ENCODE measurements at regions of chr1 and their contacts with region 1.

Region 1: DNA sequence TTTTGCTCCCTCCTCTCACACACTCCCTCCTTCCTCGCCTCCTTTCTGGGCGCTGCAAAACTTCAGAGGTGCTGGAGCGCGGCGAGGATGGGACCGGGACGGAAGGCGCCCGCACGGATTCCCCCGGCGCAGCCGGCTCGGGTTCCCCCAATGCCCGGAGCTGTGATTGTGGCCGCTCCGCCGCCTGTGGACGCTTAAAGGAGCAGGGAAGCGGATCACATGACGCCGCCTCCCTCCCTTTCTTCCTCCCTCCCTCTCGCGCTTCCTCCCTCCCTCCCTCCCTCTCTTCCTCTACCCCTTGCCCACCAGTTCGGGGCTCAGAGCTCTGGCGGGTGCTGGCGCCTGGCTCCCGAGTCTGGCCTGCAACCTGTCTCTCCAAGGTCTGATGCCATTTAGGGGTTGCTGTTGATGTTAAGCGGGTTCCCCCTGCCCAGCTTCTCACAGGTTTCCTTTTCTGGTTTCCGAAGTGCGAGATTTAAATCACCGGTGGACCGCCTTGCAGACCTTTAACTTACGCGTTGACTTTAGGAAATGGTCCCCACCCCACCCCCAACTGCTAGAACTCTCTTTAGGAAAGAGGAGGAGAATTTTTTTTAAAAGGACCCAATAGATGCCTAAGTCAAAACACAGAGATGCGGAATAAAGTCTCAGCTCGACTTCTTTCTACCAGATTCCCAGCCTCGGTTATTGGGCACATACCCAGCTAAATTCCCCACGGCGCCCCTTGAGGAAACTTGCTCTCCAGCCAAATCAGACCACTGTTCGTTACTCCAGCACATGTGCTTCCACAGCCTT is at the start of gene WLS:
- DNase-seq: peak; percentile 80
- ATAC-seq: peak; percentile 78
- H3K4me3 ChIP-seq: peak within 1 kb of the TSS; percentile 82
- H3K27ac ChIP-seq: peak within 1 kb of the TSS; percentile 90
- H3K4me1 ChIP-seq: peaks cover 6% of the 10 kb centered on the region
- H3K27me3 ChIP-seq: peaks cover 1% of the 10 kb centered on the region; the same call in 1 of the 2 replicates
- CTCF ChIP-seq: 0 out of 2 replicates have a peak, but pooled peaks have one; percentile 7
- POLR2A ChIP-seq: peak; percentile 95
- RAD21 ChIP-seq: peak; percentile 34; the same call in 1 of the 2 replicates
- total RNA-seq, gene WLS: 139 and 157 TPM in 2 replicates

Region 2: GRCh38 chr1:68120136-68120791 is 112.3 kb before region 1 on chr1:
- CTCF ChIA-PET with region 1: interaction called, 3 read pairs
- POLR2A ChIA-PET with region 1: no interaction called
- dilution Hi-C with region 1: no loop called
- in situ Hi-C with region 1: no loop called
- intact Hi-C with region 1: loop called (anchors 1 kb)
- DNase-seq: peak; percentile 85
- ATAC-seq: peak; percentile 86
- H3K4me3 ChIP-seq: no peak overlapping the region
- H3K27ac ChIP-seq: no peak overlapping the region
- H3K4me1 ChIP-seq: peaks cover 9% of the 10 kb centered on the region
- H3K27me3 ChIP-seq: no peaks in the 10 kb centered on the region
- CTCF ChIP-seq: peak; percentile 85
- POLR2A ChIP-seq: no peak
- RAD21 ChIP-seq: peak; percentile 93

Region 3: GRCh38 chr1:68141071-68142021 is 91.2 kb before region 1 on chr1:
- CTCF ChIA-PET with region 1: no interaction called
- POLR2A ChIA-PET with region 1: no interaction called
- dilution Hi-C with region 1: no loop called
- in situ Hi-C with region 1: no loop called
- intact Hi-C with region 1: loop called (anchors 1 kb)
- DNase-seq: peak; percentile 38
- ATAC-seq: peak; percentile 14; the same call in 1 of the 2 replicates
- H3K4me3 ChIP-seq: no peak overlapping the region
- H3K27ac ChIP-seq: peak overlapping the region; percentile 88; the same call in 1 of the 2 replicates
- H3K4me1 ChIP-seq: peaks cover 19% of the 10 kb centered on the region
- H3K27me3 ChIP-seq: no peaks in the 10 kb centered on the region
- CTCF ChIP-seq: no peak
- POLR2A ChIP-seq: no peak
- RAD21 ChIP-seq: no peak

Region 4: DNA sequence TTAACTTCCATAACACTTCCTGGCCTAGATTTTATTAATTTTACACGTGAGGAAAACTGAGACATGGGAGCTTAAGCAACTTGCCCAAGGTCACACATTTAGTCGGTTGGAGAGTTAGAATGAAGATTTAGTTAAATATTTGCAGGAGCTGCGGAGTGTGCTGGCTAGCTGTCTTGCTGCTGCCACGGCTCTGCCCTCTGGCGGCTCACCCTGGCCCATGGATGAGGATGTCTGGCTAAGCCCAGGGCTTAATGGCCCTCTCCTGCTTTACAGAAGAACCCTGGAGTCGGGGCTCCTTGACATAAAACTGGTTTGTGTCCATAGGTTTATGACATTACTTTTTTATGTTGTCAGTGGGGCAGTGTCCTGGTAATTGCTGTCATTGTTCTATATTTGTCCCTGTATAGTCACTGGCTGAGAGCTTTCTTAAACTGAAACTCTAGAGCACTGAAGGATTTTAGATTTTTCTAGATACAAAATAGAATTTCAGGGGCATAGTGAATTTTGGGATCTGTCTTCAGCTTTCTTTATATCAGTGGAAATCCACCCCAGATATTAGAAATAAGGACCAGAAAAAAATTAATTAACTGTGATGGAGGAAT is 88.6 kb after region 1 on chr1:
- CTCF ChIA-PET with region 1: no interaction called
- POLR2A ChIA-PET with region 1: no interaction called
- dilution Hi-C with region 1: no loop called
- in situ Hi-C with region 1: no loop called
- intact Hi-C with region 1: loop called (anchors 1 kb)
- DNase-seq: peak; percentile 61
- ATAC-seq: peak; percentile 89
- H3K4me3 ChIP-seq: no peak overlapping the region
- H3K27ac ChIP-seq: no peak overlapping the region
- H3K4me1 ChIP-seq: peaks cover 19% of the 10 kb centered on the region
- H3K27me3 ChIP-seq: no peaks in the 10 kb centered on the region
- CTCF ChIP-seq: peak; percentile 64
- POLR2A ChIP-seq: no peak
- RAD21 ChIP-seq: peak; percentile 75

Region 5: DNA sequence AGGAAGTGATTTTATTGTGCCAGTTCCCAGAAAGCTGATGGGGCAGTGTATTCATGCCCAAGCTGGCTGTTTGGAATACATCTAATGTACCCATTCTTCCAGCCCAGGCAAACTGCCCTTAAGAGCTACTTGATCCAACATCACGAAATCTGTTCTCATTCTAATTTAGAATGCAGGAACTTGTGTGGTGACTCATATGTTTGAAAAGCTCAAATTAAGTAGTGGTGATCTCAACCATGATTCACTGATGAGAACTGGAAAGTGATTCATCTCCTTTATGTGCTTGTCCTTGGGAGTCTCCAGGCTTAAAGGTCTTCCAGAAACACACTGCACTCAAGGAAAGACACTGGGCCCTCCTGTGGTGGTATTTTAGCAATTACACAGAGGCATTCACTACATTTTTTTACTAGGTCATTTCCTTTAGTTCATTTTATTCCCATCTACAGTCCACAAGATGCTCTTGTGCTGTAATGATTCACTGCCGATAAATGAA is 151.8 kb after region 1 on chr1:
- CTCF ChIA-PET with region 1: no interaction called
- POLR2A ChIA-PET with region 1: no interaction called
- dilution Hi-C with region 1: no loop called
- in situ Hi-C with region 1: no loop called
- intact Hi-C with region 1: loop called (anchors 1 kb)
- DNase-seq: peak; percentile 100
- ATAC-seq: peak; percentile 97
- H3K4me3 ChIP-seq: no peak overlapping the region
- H3K27ac ChIP-seq: peak overlapping the region; percentile 68
- H3K4me1 ChIP-seq: peaks cover 7% of the 10 kb centered on the region; the same call in 1 of the 2 replicates
- H3K27me3 ChIP-seq: no peaks in the 10 kb centered on the region
- CTCF ChIP-seq: peak; percentile 60
- POLR2A ChIP-seq: no peak
- RAD21 ChIP-seq: peak; percentile 63

Region 6: GRCh38 chr1:69737527-69738185 is 1505.1 kb after region 1 on chr1:
- CTCF ChIA-PET with region 1: no interaction called
- POLR2A ChIA-PET with region 1: no interaction called
- dilution Hi-C with region 1: no loop called
- in situ Hi-C with region 1: no loop called
- intact Hi-C with region 1: loop called (anchors 5 kb)
- DNase-seq: peak; percentile 67
- ATAC-seq: peak; percentile 70
- H3K4me3 ChIP-seq: no peak overlapping the region
- H3K27ac ChIP-seq: no peak overlapping the region
- H3K4me1 ChIP-seq: no peaks in the 10 kb centered on the region
- H3K27me3 ChIP-seq: no peaks in the 10 kb centered on the region
- CTCF ChIP-seq: peak; percentile 68
- POLR2A ChIP-seq: no peak
- RAD21 ChIP-seq: peak; percentile 78